T-cell (primary cell): ENCODE measurements at regions of chr2 and their contacts with region 1.

Region 1: DNA sequence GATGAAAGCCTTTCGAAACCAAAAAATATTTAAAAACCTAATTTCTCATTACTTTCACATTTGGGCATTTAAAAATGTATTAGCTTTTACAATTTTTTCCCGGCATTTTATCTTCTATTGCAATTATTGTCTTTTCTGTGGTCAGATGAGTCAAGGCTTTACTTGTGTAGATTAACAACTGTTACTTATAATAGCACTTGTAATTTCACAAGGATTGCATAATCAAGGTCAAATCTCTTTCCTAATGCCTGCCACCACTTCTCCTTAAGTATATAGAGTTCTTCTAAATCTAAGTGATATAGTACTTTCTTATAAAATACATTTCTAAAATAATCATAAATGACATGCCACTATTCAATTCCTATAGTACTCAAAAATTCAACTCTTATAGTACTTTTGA is 67.2 kb downstream of the SLC8A1 start:
- DNase-seq: no peak
- ATAC-seq: no peak
- H3K4me3 ChIP-seq: no peak overlapping the region
- H3K4me3 Mint-ChIP-seq: no peak overlapping the region
- H3K27ac ChIP-seq: no peak overlapping the region
- H3K27ac Mint-ChIP-seq: no peak overlapping the region
- H3K4me1 ChIP-seq: no peaks in the 10 kb centered on the region
- H3K4me1 Mint-ChIP-seq: no peaks in the 10 kb centered on the region
- H3K27me3 ChIP-seq: no peaks in the 10 kb centered on the region
- H3K27me3 Mint-ChIP-seq: no peaks in the 10 kb centered on the region

Region 2: DNA sequence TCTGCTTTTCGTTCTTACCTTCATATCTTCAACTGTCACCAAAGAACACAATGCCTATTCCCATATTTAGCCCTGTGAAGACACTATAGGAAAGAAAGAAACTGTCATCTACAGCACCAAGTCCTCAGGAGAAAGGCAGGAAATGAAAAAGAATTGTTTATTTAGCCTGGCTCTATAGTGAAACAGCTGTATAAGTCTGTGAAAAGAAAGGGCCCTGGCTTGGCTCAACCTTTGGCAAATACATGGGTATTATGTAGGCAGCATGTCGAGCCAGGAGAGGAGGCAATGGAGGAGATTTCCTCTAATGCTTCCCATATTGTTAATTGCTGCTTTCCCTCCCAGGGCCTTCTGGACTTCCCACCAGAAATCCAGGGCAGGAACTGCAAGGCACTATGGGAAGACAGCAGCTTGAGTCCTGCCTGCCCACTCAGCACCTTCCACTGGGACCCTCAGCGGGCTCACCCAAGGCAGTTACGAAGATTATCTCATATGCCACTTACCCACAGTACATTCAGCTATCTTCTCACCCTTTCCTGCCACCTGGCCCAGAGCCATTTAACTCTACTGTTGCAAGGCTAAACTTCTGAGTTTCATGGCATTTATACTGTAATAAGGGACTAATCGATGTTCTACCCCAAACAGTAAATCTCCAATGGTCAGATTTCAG is 37.0 kb after region 1 on chr2:
- CTCF ChIA-PET with region 1: no interaction called
- POLR2A ChIA-PET with region 1: interaction called in 1 of 2 experiments, 13 read pairs
- DNase-seq: no peak
- ATAC-seq: no peak
- H3K4me3 ChIP-seq: no peak overlapping the region
- H3K4me3 Mint-ChIP-seq: no peak overlapping the region
- H3K27ac ChIP-seq: no peak overlapping the region
- H3K27ac Mint-ChIP-seq: no peak overlapping the region
- H3K4me1 ChIP-seq: no peaks in the 10 kb centered on the region
- H3K4me1 Mint-ChIP-seq: no peaks in the 10 kb centered on the region
- H3K27me3 ChIP-seq: no peaks in the 10 kb centered on the region
- H3K27me3 Mint-ChIP-seq: no peaks in the 10 kb centered on the region